ENCODE measurements at regions of chr17 and their contacts with region 1.

Region 1: DNA sequence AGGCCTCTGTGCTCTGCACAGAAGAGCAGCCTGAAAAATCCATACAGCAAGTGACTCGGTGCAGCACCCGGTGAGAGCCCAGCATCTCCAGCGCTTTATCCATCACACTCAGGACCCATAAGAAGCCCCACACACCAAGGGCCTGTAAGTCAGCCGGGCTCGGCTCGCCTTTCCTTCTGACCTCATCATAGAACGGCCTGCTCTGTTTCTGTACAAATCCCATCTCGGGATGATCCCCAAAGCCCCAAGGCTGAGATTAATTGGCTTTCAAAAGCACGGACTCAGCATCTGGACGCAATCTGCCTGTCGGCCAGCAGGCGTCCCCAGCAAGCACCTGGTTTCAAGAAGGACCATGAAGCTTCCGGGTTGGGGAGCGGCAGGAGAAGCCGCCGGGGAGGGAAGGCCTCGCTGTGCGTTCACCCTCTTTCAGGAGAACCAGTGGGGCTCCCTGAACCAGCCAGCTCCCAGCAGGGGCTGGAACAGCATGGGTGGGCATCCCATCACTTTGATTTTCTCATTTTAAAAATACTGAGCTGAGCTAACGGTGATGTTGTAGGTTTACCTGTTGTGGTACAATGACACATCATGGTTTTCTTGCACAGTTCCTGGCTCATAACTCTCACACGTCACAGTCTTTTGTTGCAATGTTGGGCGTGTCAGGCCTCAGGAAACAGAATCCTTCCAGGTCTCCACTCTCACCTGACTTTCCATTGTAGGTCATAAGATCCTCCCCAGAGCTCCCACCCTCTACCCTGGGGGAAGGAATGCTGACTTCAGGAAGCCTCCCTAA is 6.7 kb downstream of the CCDC57 start:
- DNase-seq: peak; percentile 89
- ATAC-seq: peak; percentile 76
- H3K4me3 Mint-ChIP-seq: peak overlapping the region; percentile 60
- H3K27ac Mint-ChIP-seq: peak overlapping the region; percentile 93
- H3K4me1 Mint-ChIP-seq: peaks cover 52% of the 10 kb centered on the region
- H3K27me3 Mint-ChIP-seq: no peaks in the 10 kb centered on the region

Region 2: DNA sequence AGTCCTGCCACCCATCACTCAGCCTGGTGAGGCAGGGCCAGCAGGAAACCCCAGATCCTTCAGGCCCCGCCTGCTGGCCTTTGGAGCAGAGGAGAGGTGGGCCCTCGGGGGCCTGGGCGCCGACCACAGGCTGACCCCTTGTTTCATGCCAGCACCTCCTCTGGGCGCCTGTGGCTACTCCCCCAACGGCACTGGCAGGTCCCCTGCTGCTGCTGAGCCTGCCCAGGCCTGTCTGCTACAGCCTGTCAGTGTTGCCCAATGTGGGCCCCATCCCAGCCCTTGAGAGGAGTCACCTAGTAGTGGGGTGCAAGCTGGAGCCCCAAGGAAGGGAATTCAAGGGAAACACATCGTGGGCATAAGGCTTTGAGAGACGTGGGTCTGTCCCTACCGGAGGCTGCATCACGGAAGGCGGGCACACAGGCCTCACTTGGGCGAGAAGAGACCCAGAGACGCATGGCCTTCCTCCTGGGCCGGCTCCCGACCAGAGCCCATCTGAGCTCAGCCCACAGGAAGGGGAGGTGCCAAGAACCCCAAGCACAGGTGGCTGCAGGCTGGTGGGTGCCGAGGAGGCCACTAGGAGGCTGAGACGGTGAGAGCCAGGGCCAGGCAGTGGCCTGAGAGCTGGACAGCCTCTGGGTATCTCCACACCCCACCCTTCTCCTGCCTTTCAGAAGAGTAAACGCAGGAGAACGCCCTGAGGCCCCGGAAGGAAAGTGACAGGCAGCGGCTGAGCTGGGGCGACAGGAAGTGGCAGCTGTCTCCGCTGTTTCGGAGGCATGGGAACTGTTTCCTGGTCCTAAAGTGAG is 99.8 kb before region 1 on chr17:
- CTCF ChIA-PET with region 1: interaction called, 5 read pairs
- POLR2A ChIA-PET with region 1: no interaction called
- intact Hi-C with region 1: loop called in 1 of 2 experiments (anchors 5 kb)
- DNase-seq: peak; percentile 81
- ATAC-seq: peak; percentile 82
- H3K4me3 Mint-ChIP-seq: peak overlapping the region; percentile 84
- H3K27ac Mint-ChIP-seq: peak overlapping the region; percentile 96
- H3K4me1 Mint-ChIP-seq: peaks cover 43% of the 10 kb centered on the region
- H3K27me3 Mint-ChIP-seq: no peaks in the 10 kb centered on the region

Region 3: GRCh38 chr17:82236142-82236981 is 30.4 kb after region 1 on chr17:
- CTCF ChIA-PET with region 1: interaction called, 19 read pairs
- POLR2A ChIA-PET with region 1: interaction called, 6 read pairs
- intact Hi-C with region 1: no loop called
- DNase-seq: peak; percentile 85
- ATAC-seq: peak; percentile 25
- H3K4me3 Mint-ChIP-seq: no peak overlapping the region
- H3K27ac Mint-ChIP-seq: no peak overlapping the region
- H3K4me1 Mint-ChIP-seq: peaks cover 46% of the 10 kb centered on the region
- H3K27me3 Mint-ChIP-seq: no peaks in the 10 kb centered on the region

Region 4: GRCh38 chr17:82338858-82339633 is 133.1 kb after region 1 on chr17:
- CTCF ChIA-PET with region 1: no interaction called
- POLR2A ChIA-PET with region 1: no interaction called
- intact Hi-C with region 1: no loop called
- DNase-seq: peak; percentile 17
- ATAC-seq: no peak
- H3K4me3 Mint-ChIP-seq: no peak overlapping the region
- H3K27ac Mint-ChIP-seq: no peak overlapping the region
- H3K4me1 Mint-ChIP-seq: peaks cover 32% of the 10 kb centered on the region
- H3K27me3 Mint-ChIP-seq: no peaks in the 10 kb centered on the region